Panc1 (cell line): ENCODE measurements at regions of chr3 and their contacts with region 1.

Region 1: DNA sequence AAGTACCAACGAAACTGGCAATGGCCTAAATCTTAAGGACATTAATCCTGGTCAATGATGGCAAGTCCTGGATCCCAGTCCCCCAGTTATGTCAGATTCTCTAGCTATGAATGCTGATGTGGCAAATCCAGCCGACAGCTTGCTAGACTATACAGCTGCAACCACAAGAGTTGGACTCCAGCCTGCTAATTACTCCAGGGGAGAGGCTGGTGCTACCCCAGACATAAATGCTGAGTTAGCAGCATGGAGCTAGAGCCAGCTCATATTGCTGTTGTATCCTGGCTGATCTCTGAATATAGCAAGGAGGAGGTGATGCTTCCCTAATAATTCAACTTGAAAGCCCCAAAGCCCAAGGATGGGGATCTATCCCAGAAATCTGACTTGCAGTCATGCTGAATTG is 207.1 kb downstream of the LRRN1 start:
- DNase-seq: no peak
- ATAC-seq: no peak
- H3K4me3 ChIP-seq: no peak overlapping the region
- H3K27ac ChIP-seq: no peak overlapping the region
- H3K4me1 ChIP-seq: no peaks in the 10 kb centered on the region
- H3K27me3 ChIP-seq: no peaks in the 10 kb centered on the region
- CTCF ChIP-seq: no peak

Region 2: GRCh38 chr3:2950159-2950558 is 1056.1 kb before region 1 on chr3:
- CTCF ChIA-PET with region 1: no interaction called
- POLR2A ChIA-PET with region 1: no interaction called
- in situ Hi-C with region 1: no loop called
- intact Hi-C with region 1: no loop called
- DNase-seq: no peak
- ATAC-seq: no peak
- H3K4me3 ChIP-seq: no peak overlapping the region
- H3K27ac ChIP-seq: no peak overlapping the region
- H3K4me1 ChIP-seq: no peaks in the 10 kb centered on the region
- H3K27me3 ChIP-seq: no peaks in the 10 kb centered on the region
- CTCF ChIP-seq: no peak

Region 3: DNA sequence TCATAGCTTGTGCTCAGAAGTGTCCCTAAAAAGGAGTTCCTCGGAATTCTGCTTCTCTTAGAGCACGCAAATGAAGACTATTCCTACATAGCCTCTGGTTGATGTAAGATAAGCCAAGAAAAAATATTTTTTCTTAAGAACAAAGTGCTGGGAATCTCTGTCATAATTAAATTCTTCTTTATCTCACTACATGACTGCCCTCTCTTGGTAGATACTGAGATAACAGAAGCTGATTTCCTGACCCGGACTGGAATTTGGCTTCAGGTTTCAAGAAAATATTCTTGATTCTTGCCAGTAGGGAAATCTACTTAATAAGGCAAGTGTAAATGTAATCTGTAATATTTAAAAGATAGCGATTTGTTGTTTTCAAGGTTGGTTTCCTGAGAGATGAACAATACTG is 265.5 kb after region 1 on chr3:
- CTCF ChIA-PET with region 1: no interaction called
- POLR2A ChIA-PET with region 1: no interaction called
- in situ Hi-C with region 1: no loop called
- intact Hi-C with region 1: loop called (anchors 10 kb)
- DNase-seq: no peak
- ATAC-seq: no peak
- H3K4me3 ChIP-seq: no peak overlapping the region
- H3K27ac ChIP-seq: no peak overlapping the region
- H3K4me1 ChIP-seq: no peaks in the 10 kb centered on the region
- H3K27me3 ChIP-seq: no peaks in the 10 kb centered on the region
- CTCF ChIP-seq: peak; percentile 53; the same call in 1 of the 2 replicates